G401 (cell line): ENCODE measurements at regions of chr16 and their contacts with region 1.

Region 1: DNA sequence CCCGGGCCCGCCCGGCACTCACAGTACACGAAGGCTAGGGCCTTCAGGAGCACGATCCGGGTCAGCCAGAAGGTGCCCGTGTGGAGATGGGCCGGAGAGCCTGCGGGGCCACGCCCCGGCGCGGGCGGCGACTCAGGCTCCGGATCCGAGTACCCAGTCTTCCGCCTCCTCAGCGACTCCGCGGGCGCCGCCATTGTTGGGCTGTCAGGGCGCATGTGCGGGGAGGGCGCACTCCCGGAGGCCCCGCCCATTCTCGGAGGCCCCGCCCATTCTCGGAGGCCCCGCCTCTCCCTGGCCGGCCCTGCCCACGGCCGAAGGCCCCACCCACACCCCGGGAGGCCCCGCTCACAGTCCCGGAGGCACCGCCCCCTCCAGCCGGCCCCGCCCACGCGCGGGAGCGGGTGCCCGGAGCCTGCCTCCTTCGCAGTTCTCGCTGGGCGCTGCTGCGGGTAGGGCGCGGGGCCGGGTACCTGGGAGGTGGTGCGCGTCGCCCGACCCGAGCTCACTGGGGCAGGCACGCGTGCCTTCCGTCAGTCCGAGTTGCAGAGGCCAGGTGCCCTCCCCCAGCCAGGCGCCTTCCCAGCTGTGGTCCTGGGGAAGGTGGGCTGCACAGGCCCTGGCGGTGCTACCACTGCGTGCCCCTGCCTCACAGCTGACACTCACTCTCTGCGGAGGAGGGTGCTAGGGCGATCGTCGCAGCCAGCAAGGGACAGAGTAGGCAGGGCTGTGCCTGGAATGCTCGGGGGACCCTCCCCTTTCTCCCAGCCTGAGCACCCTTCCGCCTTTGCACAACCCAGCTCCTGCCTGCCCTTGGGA is at the start of gene LMF1:
- DNase-seq: peak; percentile 83
- total RNA-seq, gene LMF1: 25.9 and 34.1 TPM in 2 replicates

Region 2: GRCh38 chr16:714558-715476 is 256.2 kb before region 1 on chr16 and contains the start of gene METRN:
- in situ Hi-C with region 1: loop called (anchors 10 kb)
- DNase-seq: peak; percentile 85
- total RNA-seq, gene METRN: 428 and 493 TPM in 2 replicates

Region 3: GRCh38 chr16:740764-741505 is 230.0 kb before region 1 on chr16 and contains the start of gene CIAO3:
- in situ Hi-C with region 1: no loop called
- DNase-seq: peak; percentile 84
- total RNA-seq, gene CIAO3: 29.6 and 49.4 TPM in 2 replicates

Region 4: DNA sequence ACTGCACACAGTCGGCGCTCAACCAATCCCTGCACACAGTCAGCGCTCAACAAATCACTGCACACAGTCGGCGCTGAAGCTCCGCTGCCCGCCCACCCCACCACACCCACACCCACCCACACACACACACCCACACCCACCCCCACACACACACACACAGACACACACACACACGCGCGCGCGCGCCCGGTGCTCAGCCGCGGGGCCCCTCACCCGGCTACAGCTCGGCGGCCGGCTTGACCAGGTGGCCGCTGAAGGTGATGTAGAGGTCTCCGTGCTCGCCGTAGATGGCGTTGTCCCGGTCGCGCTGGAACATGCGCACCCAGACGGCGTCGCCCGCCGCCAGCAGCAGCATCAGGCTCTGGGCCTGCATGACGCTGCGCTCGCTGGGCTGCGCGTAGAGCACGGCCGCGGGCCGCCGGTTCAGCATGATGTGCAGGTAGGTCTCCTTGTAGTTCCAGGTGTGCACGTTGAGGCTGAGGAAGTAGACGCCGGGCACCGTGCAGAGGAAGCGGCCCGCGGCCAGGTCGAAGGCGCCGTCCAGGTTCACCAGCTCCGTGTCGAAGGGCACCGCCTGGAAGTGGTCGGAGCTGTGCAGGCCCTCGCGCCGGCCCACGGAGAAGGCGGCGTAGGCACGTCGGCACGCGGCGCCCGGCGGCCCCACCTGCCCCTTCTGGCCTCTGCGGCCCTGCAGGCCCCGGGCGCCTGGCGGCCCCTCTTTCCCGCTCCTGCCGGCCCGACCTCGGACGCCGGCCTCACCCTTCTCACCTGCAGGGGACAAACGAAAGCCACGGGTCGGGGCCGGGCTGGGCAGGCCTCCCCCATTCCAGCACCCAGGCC is 122.5 kb after region 1 on chr16:
- in situ Hi-C with region 1: no loop called
- DNase-seq: peak; percentile 36